Activated B cell treated with CpG ODN at 0.5 μM for 24 hours (primary cell): ENCODE measurements at regions of chr2 and their contacts with region 1.

Region 1: DNA sequence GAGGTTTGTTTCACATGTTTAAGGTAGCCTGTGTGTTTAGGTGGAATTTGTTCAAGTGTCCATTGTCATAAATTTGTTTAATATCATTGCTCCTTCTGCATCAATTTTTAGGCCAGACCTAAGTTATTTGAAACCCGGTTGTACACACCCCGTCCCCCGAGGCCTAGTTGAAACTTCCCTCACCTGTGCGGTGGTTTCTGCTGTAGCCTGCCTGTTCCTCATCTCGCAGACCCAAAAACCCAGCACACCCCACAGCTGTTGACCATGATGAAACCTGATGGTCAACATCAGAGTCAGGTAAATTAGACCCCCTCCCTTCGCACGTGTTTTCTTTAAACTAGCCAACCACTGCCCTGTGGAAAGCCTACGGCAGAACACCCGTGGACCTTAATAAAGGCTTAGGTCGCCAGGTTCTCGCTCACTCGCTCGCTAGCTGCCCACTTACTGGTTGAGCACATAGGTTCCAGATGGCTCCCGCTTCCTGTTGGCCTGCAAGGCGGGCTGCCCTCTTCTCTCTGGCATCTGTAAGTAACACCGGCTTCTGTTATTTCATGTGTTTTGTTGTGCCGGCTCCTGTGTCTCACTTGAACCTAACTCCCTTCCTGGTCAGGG is 64.4 kb downstream of the EML6 start:
- DNase-seq: peak; percentile 15
- ATAC-seq: peak; percentile 75
- H3K4me3 Mint-ChIP-seq: peak overlapping the region; percentile 63
- H3K27ac Mint-ChIP-seq: peak overlapping the region; percentile 78
- H3K4me1 Mint-ChIP-seq: peaks cover 41% of the 10 kb centered on the region
- H3K27me3 Mint-ChIP-seq: no peaks in the 10 kb centered on the region
- CTCF ChIP-seq: no peak

Region 2: DNA sequence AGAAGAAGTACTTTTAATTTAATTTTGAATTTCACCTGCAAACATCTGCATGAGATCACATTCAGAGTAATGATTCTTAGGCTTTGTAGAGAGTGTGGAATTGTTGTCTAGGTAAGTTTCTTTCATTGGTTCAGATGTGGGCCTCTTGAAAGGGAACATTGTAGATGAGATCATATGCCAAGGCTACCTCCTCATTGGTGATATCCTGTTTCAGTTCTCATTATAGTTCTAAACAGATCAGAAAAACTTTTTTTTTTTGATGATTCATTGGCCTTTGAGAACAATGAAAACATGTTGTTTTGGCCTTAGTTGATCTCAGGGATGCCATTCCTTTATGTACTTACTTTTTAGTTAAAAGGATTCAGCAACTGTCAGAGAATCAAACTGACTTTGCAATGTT is 19.9 kb before region 1 on chr2:
- CTCF ChIA-PET with region 1: no interaction called
- POLR2A ChIA-PET with region 1: interaction called, 6 read pairs
- intact Hi-C with region 1: loop called (anchors 2 kb)
- DNase-seq: no peak
- ATAC-seq: peak; percentile 92
- H3K4me3 Mint-ChIP-seq: no peak overlapping the region
- H3K27ac Mint-ChIP-seq: peak overlapping the region; percentile 65
- H3K4me1 Mint-ChIP-seq: peaks cover 15% of the 10 kb centered on the region
- H3K27me3 Mint-ChIP-seq: no peaks in the 10 kb centered on the region
- CTCF ChIP-seq: no peak